ENCODE measurements at regions of chr20 and their contacts with region 1.

Region 1: GRCh38 chr20:17796091-17796563 is 96.4 kb downstream of the BANF2 start:
- DNase-seq: peak; percentile 26 to 84
- H3K4me3 ChIP-seq: no peak overlapping the region
- H3K27ac ChIP-seq: peak overlapping the region; percentile 72 to 83
- H3K4me1 ChIP-seq: peaks cover 0 to 26% of the 10 kb centered on the region in 2 donors
- H3K27me3 ChIP-seq: no peaks in the 10 kb centered on the region
- CTCF ChIP-seq: no peak

Region 2: GRCh38 chr20:17835240-17835935 is 39.3 kb after region 1 on chr20:
- intact Hi-C with region 1: loop called (anchors 2 kb)
- DNase-seq: peak in 1 of 2 donors; percentile 92
- H3K4me3 ChIP-seq: no peak overlapping the region
- H3K27ac ChIP-seq: peak overlapping the region; percentile 88 to 90
- H3K4me1 ChIP-seq: peaks cover 15 to 25% of the 10 kb centered on the region in 2 donors
- H3K27me3 ChIP-seq: no peaks in the 10 kb centered on the region
- CTCF ChIP-seq: no peak

Region 3: GRCh38 chr20:17849901-17850683 is 54.0 kb after region 1 on chr20:
- intact Hi-C with region 1: loop called (anchors 1 kb)
- DNase-seq: peak; percentile 78 to 97
- H3K4me3 ChIP-seq: peak overlapping the region in 1 of 2 donors; percentile 8
- H3K27ac ChIP-seq: peak overlapping the region; percentile 90 to 93
- H3K4me1 ChIP-seq: peaks cover 7 to 14% of the 10 kb centered on the region in 2 donors
- H3K27me3 ChIP-seq: no peaks in the 10 kb centered on the region
- CTCF ChIP-seq: no peak

Region 4: DNA sequence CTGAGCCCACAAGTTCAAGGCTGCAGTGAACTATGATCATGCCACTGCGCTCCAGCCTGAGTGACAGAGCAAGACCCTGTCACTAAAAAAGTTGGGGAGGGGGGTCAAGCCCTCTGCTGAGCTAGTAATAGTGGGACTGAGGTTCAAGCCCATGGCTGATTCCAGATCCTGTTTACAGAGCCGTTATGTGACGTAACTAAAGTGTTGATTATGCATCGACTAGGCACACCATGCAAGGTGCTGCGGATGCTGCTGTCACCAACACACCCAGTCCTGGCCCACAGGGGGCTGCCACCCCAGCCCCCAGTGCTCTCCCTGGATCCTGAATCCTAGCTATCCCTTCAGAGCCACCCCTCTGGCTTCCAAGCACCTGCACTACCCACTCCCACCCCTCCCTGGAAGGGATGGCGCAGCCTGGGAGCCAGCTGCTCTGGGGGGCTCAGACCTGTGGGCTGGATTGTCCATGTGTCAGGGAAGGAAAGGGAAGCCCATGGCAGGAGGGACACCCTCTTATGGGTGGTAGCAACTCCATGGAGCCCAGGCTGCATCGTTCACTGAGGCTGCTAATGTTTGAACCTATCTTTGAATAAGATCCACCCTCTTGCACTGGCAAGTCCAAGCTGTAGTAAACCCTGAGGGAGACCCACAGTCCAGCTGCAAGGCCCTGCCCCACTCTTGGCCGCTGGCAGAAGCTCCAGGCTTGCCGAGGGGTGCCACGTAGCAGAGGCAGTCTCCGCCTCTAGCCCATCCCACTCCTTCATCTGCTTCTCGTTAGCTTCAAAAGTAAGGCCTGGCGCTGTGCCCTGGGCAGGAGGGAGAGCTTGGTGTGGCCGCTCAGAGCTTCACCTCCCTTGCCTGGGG is 77.5 kb after region 1 on chr20:
- intact Hi-C with region 1: loop called (anchors 1 kb)
- DNase-seq: peak; percentile 55 to 92
- H3K4me3 ChIP-seq: peak overlapping the region in 1 of 2 donors; percentile 29
- H3K27ac ChIP-seq: peak overlapping the region; percentile 45 to 59
- H3K4me1 ChIP-seq: peaks cover 12 to 26% of the 10 kb centered on the region in 2 donors
- H3K27me3 ChIP-seq: no peaks in the 10 kb centered on the region
- CTCF ChIP-seq: no peak

Region 5: DNA sequence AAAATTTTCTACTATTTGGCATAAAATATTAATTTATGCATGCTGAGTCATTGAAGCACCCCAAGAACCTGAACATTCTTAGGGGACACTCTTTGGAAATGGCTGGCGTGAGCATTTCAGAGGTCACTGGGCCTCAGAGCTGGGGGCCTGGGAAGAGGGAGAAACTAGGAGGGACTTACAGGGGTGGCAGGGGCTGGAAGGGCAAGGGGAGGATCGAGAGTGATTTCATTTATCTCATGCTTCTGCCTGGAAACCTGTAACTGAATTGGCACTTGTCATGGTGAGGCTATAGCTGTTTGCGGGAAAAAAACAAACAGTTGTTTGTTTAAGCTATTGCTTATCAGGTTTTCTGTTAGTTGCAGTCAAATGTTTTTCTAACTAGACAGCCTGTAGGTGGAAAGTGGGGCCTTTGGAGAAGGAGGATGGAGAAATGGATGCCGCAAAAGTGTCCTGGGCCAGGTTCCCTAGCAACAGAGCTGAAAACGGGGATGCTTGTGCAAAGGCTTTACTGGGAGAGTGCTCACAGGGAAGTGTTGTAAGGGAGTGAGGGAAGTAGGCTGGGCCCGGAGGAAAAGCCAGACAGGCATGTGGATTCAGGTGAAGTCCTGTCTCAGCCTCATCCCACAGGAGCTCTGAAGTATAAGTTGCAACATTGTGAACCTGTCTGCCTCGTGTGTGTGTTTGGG is 305.1 kb after region 1 on chr20:
- intact Hi-C with region 1: no loop called
- DNase-seq: no peak
- H3K4me3 ChIP-seq: no peak overlapping the region
- H3K27ac ChIP-seq: no peak overlapping the region
- H3K4me1 ChIP-seq: no peaks in the 10 kb centered on the region
- H3K27me3 ChIP-seq: no peaks in the 10 kb centered on the region
- CTCF ChIP-seq: no peak